ENCODE measurements at regions of chr6 and their contacts with region 1.

Region 1: GRCh38 chr6:159761873-159762680 is at the start of gene ACAT2:
- DNase-seq: peak; percentile 96
- ATAC-seq: peak; percentile 95
- H3K4me3 Mint-ChIP-seq: peak within 1 kb of the TSS; percentile 97
- H3K27ac Mint-ChIP-seq: peak within 1 kb of the TSS; percentile 98
- H3K4me1 Mint-ChIP-seq: peaks cover 29% of the 10 kb centered on the region
- H3K27me3 Mint-ChIP-seq: no peaks in the 10 kb centered on the region
- CTCF ChIP-seq: no peak
- total RNA-seq, gene ACAT2: 70.8 to 74.1 TPM

Region 2: DNA sequence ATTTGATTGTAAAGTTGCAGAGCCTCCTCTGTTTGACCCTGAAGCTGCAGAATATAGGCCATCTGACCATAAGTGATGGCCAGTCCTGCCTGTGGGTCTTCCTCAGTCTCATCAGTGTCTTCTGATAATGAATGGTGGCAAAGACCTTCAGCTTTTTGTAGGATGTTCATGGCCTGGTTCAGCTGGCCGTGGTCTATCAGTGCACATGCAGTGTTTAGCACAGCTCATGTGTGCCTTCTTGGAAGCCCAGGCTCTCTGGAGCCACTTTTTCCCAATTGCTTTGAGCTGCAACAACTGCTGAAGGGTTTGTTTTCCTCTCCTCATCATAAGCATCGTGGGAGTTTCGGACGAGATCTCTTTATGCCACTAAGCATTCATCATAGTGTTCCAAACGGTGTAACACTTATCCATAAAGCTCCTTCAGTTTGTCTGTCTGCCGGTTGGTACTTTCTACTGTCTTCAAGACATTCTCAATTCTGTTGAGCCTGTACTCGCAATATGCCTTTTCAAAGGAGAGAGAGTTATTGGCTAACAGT is 1519.9 kb before region 1 on chr6:
- CTCF ChIA-PET with region 1: no interaction called
- POLR2A ChIA-PET with region 1: no interaction called
- intact Hi-C with region 1: no loop called
- DNase-seq: no peak
- ATAC-seq: no peak
- H3K4me3 Mint-ChIP-seq: no peak overlapping the region
- H3K27ac Mint-ChIP-seq: peak overlapping the region; percentile 36
- H3K4me1 Mint-ChIP-seq: peaks cover 21% of the 10 kb centered on the region
- H3K27me3 Mint-ChIP-seq: no peaks in the 10 kb centered on the region
- CTCF ChIP-seq: no peak

Region 3: GRCh38 chr6:159726918-159727716 is 35.0 kb before region 1 on chr6 and contains the start of gene WTAP:
- CTCF ChIA-PET with region 1: interaction called, 4 read pairs
- POLR2A ChIA-PET with region 1: interaction called, 20 read pairs
- intact Hi-C with region 1: loop called (anchors 5 kb)
- DNase-seq: peak; percentile 97
- ATAC-seq: peak; percentile 93
- H3K4me3 Mint-ChIP-seq: peak within 1 kb of the TSS; percentile 85
- H3K27ac Mint-ChIP-seq: peak within 1 kb of the TSS; percentile 95
- H3K4me1 Mint-ChIP-seq: peaks cover 44% of the 10 kb centered on the region
- H3K27me3 Mint-ChIP-seq: no peaks in the 10 kb centered on the region
- CTCF ChIP-seq: no peak
- total RNA-seq, gene WTAP: 79.9 to 80.6 TPM

Region 4: DNA sequence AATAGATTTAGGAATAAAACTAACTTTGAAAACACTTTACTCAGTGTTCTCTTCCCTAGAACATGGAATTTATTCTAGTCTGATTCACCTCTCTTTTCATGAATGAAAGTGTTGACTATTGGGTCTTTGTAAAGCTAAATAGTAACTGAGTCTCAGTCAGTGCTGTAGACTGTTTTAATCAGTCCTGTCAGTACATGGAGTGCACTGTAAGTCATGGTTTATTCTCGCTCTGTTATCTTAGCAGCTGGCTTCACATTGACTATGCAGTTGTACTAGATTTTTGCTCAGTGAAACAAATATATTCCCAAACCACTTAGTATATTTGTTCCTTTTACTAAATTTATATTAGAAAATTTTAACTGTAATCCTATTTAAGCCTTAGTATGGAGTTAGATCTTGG is 15.3 kb before region 1 on chr6:
- CTCF ChIA-PET with region 1: interaction called, 4 read pairs
- POLR2A ChIA-PET with region 1: interaction called, 17 read pairs
- intact Hi-C with region 1: no loop called
- DNase-seq: no peak
- ATAC-seq: no peak
- H3K4me3 Mint-ChIP-seq: no peak overlapping the region
- H3K27ac Mint-ChIP-seq: no peak overlapping the region
- H3K4me1 Mint-ChIP-seq: peaks cover 14% of the 10 kb centered on the region
- H3K27me3 Mint-ChIP-seq: no peaks in the 10 kb centered on the region
- CTCF ChIP-seq: no peak

Region 5: DNA sequence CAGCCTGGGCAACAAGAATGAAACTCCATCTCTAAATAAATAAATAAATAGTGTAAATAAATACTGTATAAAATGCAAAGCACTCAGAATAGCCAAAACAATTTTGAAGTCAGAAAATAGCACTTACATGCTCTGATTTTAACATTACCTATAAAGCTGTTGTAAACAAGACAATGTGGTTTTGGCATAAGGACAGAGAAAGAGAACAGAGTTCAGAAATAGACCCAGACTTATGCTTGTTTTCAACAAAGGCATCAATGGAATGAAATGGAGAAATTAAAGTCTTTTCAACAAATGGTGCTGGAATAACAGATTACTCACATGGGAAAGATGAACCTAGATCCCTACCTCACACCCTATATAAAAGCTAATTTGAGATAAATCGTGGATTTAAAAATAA is 10.1 kb after region 1 on chr6:
- CTCF ChIA-PET with region 1: no interaction called
- POLR2A ChIA-PET with region 1: interaction called, 14 read pairs
- intact Hi-C with region 1: no loop called
- DNase-seq: no peak
- ATAC-seq: no peak
- H3K4me3 Mint-ChIP-seq: no peak overlapping the region
- H3K27ac Mint-ChIP-seq: no peak overlapping the region
- H3K4me1 Mint-ChIP-seq: peaks cover 2% of the 10 kb centered on the region
- H3K27me3 Mint-ChIP-seq: no peaks in the 10 kb centered on the region
- CTCF ChIP-seq: no peak